ENCODE measurements at regions of chr2 and their contacts with region 1.

Region 1: DNA sequence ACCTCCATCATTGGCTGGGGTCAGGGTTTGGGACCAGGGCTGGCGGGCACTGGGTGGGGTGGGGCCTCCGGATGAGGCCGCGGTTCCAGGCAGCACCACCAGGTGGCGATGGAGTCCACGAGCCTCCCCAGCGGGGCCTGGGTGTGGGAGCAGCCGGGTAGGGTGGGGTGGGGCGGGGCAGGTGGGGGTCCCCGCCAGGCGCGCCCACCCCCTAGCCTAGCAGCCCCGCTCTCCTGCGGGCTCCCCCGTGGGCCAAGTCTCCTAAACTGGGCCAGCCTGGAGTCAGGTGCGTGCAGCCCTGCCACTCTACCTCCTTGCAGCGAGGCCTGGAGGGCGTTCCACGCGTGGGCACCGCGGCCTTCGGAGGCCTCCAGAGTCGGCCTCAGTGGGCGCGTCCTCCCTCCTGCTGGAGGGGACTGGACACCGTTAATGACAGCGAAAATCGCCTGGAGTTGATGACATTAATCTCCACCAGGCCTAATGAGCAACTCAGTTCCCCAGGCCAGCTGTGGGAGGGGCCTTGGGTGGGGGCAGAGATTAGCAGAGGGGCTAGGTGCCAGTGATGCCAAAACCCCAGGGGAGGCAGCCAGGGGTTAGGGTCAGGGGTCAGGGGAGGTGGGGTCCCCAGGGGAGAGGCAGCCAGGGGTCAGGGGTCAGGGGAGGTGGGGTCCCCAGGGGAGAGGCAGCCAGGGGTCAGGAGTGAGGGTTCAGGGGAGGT is 187.6 kb downstream of the TWIST2 start:
- DNase-seq: peak; percentile 76
- H3K4me3 ChIP-seq: no peak overlapping the region
- H3K27ac ChIP-seq: no peak overlapping the region
- H3K4me1 ChIP-seq: peaks cover 0 to 8% (median 4%) of the 10 kb centered on the region in 4 donors
- H3K27me3 ChIP-seq: no peaks in the 10 kb centered on the region
- CTCF ChIP-seq: peak in 3 of 4 experiments; percentile 58 to 99 (median 62)
- EP300 ChIP-seq: no peak
- POLR2A ChIP-seq: no peak

Region 2: DNA sequence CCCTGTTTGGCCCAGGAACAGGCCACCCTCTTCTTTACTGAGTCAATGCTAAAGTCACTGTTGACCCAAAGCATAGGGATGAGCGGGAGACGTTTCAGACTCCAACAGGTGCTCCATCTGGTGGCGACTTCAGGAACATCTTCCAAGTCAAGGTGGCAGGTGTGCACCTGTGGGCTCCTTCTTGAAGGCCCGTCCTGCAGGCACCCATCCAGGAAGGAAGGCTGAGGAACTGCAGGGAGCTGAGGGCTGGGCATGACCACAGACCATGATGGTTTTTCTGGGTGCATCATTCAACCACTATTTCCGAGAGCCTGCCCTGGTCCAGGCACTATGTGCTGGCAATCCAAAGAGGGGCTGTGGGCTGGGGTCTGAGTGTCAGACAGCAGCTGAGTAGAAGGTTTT is 846.8 kb after region 1 on chr2:
- intact Hi-C with region 1: loop called (anchors 1 kb)
- DNase-seq: no peak
- H3K4me3 ChIP-seq: no peak overlapping the region
- H3K27ac ChIP-seq: peak overlapping the region in 1 of 4 donors; percentile 63
- H3K4me1 ChIP-seq: peaks cover 0 to 10% (median 3%) of the 10 kb centered on the region in 4 donors
- H3K27me3 ChIP-seq: no peaks in the 10 kb centered on the region
- CTCF ChIP-seq: peak; percentile 39 to 74 (median 60)
- EP300 ChIP-seq: no peak
- POLR2A ChIP-seq: no peak

Region 3: DNA sequence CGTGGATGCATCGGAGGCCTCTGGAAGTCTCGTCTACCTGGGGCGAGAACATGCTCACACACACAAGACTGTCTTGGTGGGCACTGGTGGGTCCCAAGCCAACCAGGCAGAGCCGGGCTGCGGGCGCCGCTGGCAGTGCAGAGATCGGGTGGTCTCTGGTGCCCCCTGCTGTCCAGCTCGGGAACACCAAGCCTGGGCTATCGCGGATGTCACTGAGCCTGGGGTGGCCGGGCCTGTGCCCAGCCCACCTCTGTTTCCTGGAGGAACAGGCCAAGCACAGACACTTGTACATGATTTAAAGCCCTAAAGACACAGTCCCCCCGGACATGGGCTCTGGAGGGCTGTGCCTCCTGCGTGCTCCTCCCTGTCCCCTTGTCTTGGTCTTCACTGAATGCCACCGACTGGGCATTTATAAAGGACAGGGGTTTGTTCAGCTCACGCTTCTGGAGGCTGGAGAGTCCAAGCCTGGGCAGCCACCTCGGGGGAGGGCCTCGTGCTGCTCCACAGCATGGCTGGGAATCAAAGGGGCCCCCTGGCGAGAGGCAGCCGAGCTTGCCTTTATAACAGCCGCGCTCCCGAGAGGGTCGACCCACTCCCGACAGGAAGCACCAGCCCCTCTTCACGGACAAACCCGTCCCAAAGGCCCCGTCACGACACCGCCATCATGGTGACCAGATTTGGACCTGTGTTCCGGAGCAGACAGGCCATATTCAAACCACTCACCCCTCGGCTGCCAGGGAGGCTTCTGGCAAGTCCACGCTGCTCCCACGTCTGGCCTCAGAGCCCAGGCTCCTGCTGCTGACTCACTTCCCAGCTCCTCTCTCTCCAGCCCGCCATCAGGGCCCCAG is 1108.5 kb after region 1 on chr2:
- intact Hi-C with region 1: loop called (anchors 2 kb)
- DNase-seq: peak; percentile 82
- H3K4me3 ChIP-seq: no peak overlapping the region
- H3K27ac ChIP-seq: no peak overlapping the region
- H3K4me1 ChIP-seq: peaks cover 0 to 7% (median 0%) of the 10 kb centered on the region in 4 donors
- H3K27me3 ChIP-seq: peaks cover 0 to 28% (median 9%) of the 10 kb centered on the region in 3 donors
- CTCF ChIP-seq: peak; percentile 89 to 97 (median 92)
- EP300 ChIP-seq: no peak
- POLR2A ChIP-seq: no peak